ENCODE measurements at regions of chr9 and their contacts with region 1.

Region 1: GRCh38 chr9:120755827-120756434 is 37.3 kb downstream of the FBXW2 start:
- DNase-seq: no peak
- H3K4me3 ChIP-seq: no peak overlapping the region
- H3K27ac ChIP-seq: no peak overlapping the region
- H3K27me3 ChIP-seq: no peaks in the 10 kb centered on the region
- CTCF ChIP-seq: peak; percentile 83

Region 2: GRCh38 chr9:120619751-120620655 is 135.9 kb before region 1 on chr9:
- CTCF ChIA-PET with region 1: interaction called, 27 read pairs
- POLR2A ChIA-PET with region 1: no interaction called
- DNase-seq: peak; percentile 48
- H3K4me3 ChIP-seq: no peak overlapping the region
- H3K27ac ChIP-seq: no peak overlapping the region
- H3K27me3 ChIP-seq: no peaks in the 10 kb centered on the region
- CTCF ChIP-seq: peak; percentile 82

Region 3: DNA sequence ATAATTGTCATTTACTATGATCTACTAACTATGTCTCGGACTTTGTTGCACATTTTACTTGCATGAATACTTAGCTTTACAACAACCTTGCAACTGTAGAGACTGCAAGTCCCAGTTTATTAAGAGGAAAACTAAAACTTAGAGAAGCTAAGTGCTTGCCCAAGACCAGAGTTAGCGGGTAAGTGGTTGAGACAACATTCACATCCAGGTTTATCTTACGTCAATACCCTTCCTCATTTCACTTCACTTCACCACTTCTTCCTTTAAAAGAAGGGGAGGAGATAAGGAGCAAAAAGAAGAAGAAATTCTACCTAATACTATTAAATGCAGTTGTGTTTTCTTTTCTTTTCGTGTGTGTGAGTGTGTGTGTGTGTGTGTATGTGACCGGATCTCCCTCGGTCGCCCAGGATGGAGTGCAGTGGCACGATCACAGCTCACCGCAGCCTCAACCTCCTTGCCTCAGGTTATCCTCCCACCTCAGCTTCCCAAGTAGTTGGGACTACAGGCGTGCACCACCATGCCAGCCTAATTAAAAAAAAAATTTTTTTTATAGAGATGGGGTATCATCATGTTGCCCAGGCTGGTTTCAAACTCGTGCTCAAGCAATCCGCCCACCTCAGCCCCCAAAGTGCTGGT is 79.0 kb before region 1 on chr9:
- CTCF ChIA-PET with region 1: no interaction called
- POLR2A ChIA-PET with region 1: no interaction called
- DNase-seq: no peak
- H3K4me3 ChIP-seq: no peak overlapping the region
- H3K27ac ChIP-seq: no peak overlapping the region
- H3K27me3 ChIP-seq: no peaks in the 10 kb centered on the region
- CTCF ChIP-seq: no peak

Region 4: DNA sequence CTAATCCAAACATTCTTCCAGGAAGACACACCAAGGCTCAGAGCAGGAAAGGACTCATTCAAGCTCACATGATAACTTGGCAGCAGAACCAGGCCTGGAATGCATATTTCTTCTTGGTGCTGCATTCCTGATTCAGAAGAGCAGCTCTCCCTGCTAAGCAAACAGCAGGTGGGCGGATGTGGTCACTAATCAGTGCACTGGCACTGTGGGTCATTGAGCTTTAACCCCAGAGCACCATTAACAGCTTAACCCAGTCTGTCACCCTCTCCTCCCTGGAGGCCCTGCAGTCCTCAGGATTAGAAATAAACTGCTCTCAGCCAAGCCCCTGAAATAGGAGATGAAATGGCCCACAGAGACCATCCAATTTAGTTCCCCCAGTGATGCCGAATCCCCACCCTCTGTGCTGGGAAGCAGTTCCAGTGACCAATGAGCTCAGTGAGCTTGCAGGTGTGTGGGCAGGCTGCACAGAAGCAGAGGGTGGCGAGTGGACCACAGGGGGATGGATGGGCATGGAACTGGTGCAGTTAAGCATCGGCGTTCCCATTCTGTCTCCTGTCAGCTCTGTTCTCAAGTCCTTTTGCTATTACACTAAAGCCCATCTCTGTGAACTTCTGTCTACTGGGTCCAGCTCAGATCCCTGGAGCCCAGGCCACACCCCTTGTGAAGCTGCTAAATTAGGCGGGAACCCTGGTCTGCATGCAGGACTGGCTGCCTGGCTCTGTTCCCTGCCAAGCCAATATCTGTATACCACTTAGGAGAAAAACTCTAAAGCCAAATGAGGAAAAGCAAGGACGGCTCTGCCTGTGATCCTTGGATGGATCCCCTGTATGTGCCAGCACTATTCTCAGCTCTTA is 25.0 kb before region 1 on chr9:
- CTCF ChIA-PET with region 1: interaction called, 18 read pairs
- POLR2A ChIA-PET with region 1: no interaction called
- DNase-seq: peak; percentile 91
- H3K4me3 ChIP-seq: no peak overlapping the region
- H3K27ac ChIP-seq: peak overlapping the region; percentile 69
- H3K27me3 ChIP-seq: no peaks in the 10 kb centered on the region
- CTCF ChIP-seq: no peak

Region 5: DNA sequence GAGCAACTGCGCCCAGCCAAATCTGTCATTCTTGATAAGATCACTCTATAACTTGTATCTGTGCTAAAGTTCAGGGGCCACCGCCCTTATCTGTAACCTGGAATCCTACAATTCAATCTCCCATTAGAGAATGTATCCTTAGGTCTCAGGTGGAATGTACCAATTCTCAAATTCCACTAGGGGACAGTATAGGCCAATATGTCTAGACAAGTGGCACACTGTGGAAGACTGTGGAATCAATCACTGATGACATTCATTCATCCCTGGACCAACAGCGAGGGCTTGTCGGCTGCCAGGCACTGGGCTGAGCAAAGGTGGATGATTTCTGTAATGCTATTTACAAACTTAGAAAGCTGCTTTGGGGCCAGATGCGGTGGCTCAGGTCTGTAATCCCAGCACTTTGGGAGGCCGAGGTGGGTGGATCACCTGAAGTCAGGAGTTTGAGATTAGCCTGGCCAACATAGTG is 12.9 kb before region 1 on chr9:
- CTCF ChIA-PET with region 1: interaction called, 11 read pairs
- POLR2A ChIA-PET with region 1: no interaction called
- DNase-seq: no peak
- H3K4me3 ChIP-seq: no peak overlapping the region
- H3K27ac ChIP-seq: no peak overlapping the region
- H3K27me3 ChIP-seq: no peaks in the 10 kb centered on the region
- CTCF ChIP-seq: peak; percentile 60

Region 6: DNA sequence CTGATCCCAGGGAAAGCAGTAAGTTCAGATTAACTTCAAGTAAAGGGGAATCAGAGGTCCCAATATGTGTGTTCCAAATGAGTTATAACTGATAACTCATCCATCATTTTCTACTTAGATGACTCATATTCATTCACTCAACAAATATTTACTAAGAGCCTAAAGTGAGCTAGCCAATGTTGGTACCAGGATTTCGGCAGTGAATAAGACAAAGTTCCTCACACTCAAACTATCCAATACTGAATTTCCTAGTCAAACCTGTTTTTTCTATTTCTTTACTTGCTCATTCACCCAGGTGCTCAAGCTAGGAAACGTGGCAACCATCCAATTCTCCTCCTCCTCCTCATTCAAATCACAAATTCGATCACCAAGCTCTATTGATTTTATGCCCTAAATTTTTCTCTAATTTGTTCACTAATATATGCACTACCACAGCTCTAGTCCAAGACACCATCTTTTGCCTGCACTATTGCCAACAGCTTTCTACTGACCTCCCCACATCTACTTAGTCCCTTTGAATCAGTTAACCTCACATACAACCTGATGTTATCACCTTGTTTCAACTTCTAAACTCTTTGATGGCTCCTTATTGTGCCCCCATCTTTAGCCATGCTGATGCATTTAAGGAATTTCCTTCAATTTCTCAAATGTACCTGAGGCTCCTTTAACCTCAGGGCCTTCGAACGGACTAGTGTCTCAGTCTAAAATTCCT is 11.7 kb after region 1 on chr9:
- CTCF ChIA-PET with region 1: interaction called, 21 read pairs
- POLR2A ChIA-PET with region 1: no interaction called
- DNase-seq: no peak
- H3K4me3 ChIP-seq: no peak overlapping the region
- H3K27ac ChIP-seq: no peak overlapping the region
- H3K27me3 ChIP-seq: no peaks in the 10 kb centered on the region
- CTCF ChIP-seq: no peak

Region 7: GRCh38 chr9:120936011-120936763 is 180.3 kb after region 1 on chr9:
- CTCF ChIA-PET with region 1: interaction called, 16 read pairs
- POLR2A ChIA-PET with region 1: no interaction called
- DNase-seq: peak; percentile 90
- H3K4me3 ChIP-seq: peak overlapping the region; percentile 55
- H3K27ac ChIP-seq: peak overlapping the region; percentile 97
- H3K27me3 ChIP-seq: no peaks in the 10 kb centered on the region
- CTCF ChIP-seq: peak; percentile 96

Region 8: GRCh38 chr9:120960001-120960400 is 204.1 kb after region 1 on chr9:
- CTCF ChIA-PET with region 1: no interaction called
- POLR2A ChIA-PET with region 1: no interaction called
- DNase-seq: no peak
- H3K4me3 ChIP-seq: no peak overlapping the region
- H3K27ac ChIP-seq: no peak overlapping the region
- H3K27me3 ChIP-seq: no peaks in the 10 kb centered on the region
- CTCF ChIP-seq: no peak

Region 9: GRCh38 chr9:121071756-121072421 is 316.0 kb after region 1 on chr9:
- CTCF ChIA-PET with region 1: interaction called, 20 read pairs
- POLR2A ChIA-PET with region 1: no interaction called
- DNase-seq: no peak
- H3K4me3 ChIP-seq: peak overlapping the region; percentile 56
- H3K27ac ChIP-seq: peak overlapping the region; percentile 39
- H3K27me3 ChIP-seq: no peaks in the 10 kb centered on the region
- CTCF ChIP-seq: peak; percentile 44

Measured in AG04450 (cell line).